ENCODE measurements at regions of chr22 and their contacts with region 1.

Region 1: GRCh38 chr22:26161746-26162145 is 7.5 kb upstream of the SEZ6L start:
- DNase-seq: no peak
- ATAC-seq: no peak
- H3K4me3 ChIP-seq: no peak overlapping the region
- H3K27ac ChIP-seq: no peak overlapping the region
- H3K4me1 ChIP-seq: no peaks in the 10 kb centered on the region
- H3K27me3 ChIP-seq: peaks cover 0 to 2% of the 10 kb centered on the region in 2 experiments; a peak in 1 of 4 replicates
- CTCF ChIP-seq: no peak
- EP300 ChIP-seq: no peak
- POLR2A ChIP-seq: no peak
- RAD21 ChIP-seq: no peak

Region 2: DNA sequence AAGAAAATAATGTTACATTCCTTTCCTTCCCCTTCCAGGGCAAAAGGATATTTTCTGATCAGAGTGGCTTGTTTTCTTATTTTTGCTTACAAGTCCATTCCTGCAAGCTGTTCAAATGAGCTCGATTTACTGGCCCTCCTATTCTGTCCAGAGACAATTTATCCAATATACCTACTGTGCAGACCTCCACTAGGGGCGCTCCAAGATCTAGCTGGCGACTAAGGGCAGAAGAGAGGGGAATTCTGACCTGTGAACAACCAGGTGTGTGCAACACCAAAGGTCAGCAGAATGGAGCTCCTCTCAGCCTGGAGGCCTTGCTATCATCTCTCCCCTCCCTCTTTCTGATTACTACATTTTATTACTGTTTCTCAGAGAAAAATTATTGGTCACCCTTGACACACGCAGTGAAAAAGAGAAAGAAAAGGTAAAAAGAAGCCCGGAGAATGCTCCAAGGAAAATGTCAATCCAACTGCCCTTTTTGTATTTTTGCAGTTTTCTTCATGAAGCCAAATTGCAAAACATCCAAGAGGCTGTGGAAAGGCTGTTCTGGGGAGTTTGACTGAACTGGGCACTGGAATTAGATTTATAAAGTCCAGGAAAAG is 10.7 kb after region 1 on chr22:
- CTCF ChIA-PET with region 1: interaction called, 10 read pairs
- POLR2A ChIA-PET with region 1: no interaction called
- RAD21 ChIA-PET with region 1: no interaction called
- SMC1A ChIA-PET with region 1: no interaction called
- in situ Hi-C with region 1: no loop called
- intact Hi-C with region 1: no loop called
- DNase-seq: no peak
- ATAC-seq: peak; percentile 85
- H3K4me3 ChIP-seq: no peak overlapping the region
- H3K27ac ChIP-seq: no peak overlapping the region
- H3K4me1 ChIP-seq: no peaks in the 10 kb centered on the region
- H3K27me3 ChIP-seq: peaks cover 5 to 11% of the 10 kb centered on the region in 2 experiments
- CTCF ChIP-seq: peak; percentile 70 to 77 (median 71)
- EP300 ChIP-seq: no peak
- POLR2A ChIP-seq: no peak
- RAD21 ChIP-seq: peak; percentile 56

Region 3: DNA sequence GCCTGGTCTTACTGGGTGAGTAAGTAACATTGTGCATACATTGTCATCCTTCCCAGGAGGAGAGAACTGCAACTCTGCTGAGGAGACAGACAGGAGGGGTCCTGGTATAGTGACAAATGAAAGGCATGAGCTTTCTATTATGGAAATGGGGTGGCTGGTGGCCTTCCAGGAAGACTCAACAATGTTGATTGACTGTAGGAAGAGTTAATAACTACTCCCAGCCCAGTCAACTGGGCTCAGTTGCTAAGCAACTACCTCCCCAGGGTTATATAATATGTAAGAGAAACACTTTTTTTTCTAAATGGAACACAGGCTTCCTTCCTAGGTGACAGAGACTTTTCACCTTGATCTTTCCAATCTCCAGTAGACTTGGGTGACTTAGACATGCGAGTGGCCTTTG is 35.7 kb after region 1 on chr22:
- CTCF ChIA-PET with region 1: no interaction called
- POLR2A ChIA-PET with region 1: no interaction called
- RAD21 ChIA-PET with region 1: no interaction called
- SMC1A ChIA-PET with region 1: no interaction called
- in situ Hi-C with region 1: no loop called
- intact Hi-C with region 1: loop called (anchors 2 kb)
- DNase-seq: no peak
- ATAC-seq: no peak
- H3K4me3 ChIP-seq: no peak overlapping the region
- H3K27ac ChIP-seq: no peak overlapping the region
- H3K4me1 ChIP-seq: no peaks in the 10 kb centered on the region
- H3K27me3 ChIP-seq: no peaks in the 10 kb centered on the region
- CTCF ChIP-seq: no peak
- EP300 ChIP-seq: no peak
- POLR2A ChIP-seq: no peak
- RAD21 ChIP-seq: no peak